ENCODE measurements at regions of chr22 and their contacts with region 1.

Region 1: GRCh38 chr22:36913427-36914389 is at the start of gene CSF2RB:
- DNase-seq: peak; percentile 78
- H3K4me3 ChIP-seq: peak within 1 kb of the TSS; percentile 45 to 76 (median 56)
- H3K27ac ChIP-seq: peak within 1 kb of the TSS; percentile 68
- H3K4me1 ChIP-seq: peaks cover 25% of the 10 kb centered on the region
- H3K27me3 ChIP-seq: no peaks in the 10 kb centered on the region
- CTCF ChIP-seq: no peak
- POLR2A ChIP-seq: peak; percentile 36
- total RNA-seq, gene CSF2RB: 20.6 and 24.9 TPM in 2 replicates

Region 2: DNA sequence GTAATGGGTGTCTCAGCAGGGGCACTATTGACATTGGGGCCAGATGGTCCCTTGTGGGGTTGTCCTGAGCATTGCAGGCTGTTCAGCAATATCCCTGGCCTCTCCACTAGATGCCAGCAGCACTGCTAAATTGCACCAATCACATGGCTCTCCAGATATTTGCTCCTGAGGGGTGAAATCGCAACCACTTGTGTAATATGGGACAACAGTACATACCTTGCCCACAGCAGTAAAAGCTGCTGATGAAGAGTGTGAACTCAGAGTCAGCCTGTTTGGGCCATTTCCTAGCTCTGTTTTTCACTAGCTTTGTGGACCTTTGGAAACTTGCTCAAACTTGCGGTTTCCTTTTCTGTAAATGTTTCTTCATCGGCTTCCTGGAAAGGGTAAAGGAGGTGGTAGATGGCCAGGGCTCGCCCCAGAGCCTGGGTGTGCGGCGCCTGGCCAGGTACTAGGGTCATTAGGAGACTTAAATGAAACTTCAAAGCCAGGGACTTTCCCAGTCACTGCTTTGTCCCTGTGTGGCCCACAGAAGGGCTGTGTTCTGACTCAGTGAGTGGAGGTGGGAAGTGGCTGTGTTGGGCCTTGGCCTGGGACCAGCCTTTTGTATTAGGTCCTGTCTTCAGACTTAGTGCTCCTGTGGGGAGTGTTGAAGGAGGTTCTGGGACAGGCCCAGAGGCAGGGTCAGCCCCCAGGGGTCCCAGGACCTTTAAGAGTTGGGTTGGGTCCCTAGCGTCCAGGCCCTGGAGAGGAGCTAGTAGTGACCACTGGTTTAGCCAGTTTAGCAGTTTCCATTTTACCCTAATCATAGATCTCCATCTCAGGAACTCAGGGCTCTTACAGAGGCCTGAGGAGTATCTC is 39.8 kb before region 1 on chr22:
- CTCF ChIA-PET with region 1: interaction called, 9 read pairs
- POLR2A ChIA-PET with region 1: no interaction called
- dilution Hi-C with region 1: no loop called
- intact Hi-C with region 1: loop called (anchors 1 kb)
- DNase-seq: peak; percentile 82
- H3K4me3 ChIP-seq: no peak overlapping the region
- H3K27ac ChIP-seq: peak overlapping the region; percentile 82
- H3K4me1 ChIP-seq: peaks cover 26% of the 10 kb centered on the region
- H3K27me3 ChIP-seq: peaks cover 0 to 2% of the 10 kb centered on the region in 2 experiments
- CTCF ChIP-seq: peak; percentile 71 to 74
- POLR2A ChIP-seq: no peak

Region 3: GRCh38 chr22:36879775-36880174 is 33.9 kb before region 1 on chr22:
- CTCF ChIA-PET with region 1: interaction called, 3 read pairs
- POLR2A ChIA-PET with region 1: no interaction called
- dilution Hi-C with region 1: no loop called
- intact Hi-C with region 1: loop called (anchors 1 kb)
- DNase-seq: peak; percentile 93
- H3K4me3 ChIP-seq: no peak overlapping the region
- H3K27ac ChIP-seq: peak overlapping the region; percentile 96
- H3K4me1 ChIP-seq: peaks cover 37% of the 10 kb centered on the region
- H3K27me3 ChIP-seq: no peaks in the 10 kb centered on the region
- CTCF ChIP-seq: no peak
- POLR2A ChIP-seq: peak; percentile 51

Region 4: DNA sequence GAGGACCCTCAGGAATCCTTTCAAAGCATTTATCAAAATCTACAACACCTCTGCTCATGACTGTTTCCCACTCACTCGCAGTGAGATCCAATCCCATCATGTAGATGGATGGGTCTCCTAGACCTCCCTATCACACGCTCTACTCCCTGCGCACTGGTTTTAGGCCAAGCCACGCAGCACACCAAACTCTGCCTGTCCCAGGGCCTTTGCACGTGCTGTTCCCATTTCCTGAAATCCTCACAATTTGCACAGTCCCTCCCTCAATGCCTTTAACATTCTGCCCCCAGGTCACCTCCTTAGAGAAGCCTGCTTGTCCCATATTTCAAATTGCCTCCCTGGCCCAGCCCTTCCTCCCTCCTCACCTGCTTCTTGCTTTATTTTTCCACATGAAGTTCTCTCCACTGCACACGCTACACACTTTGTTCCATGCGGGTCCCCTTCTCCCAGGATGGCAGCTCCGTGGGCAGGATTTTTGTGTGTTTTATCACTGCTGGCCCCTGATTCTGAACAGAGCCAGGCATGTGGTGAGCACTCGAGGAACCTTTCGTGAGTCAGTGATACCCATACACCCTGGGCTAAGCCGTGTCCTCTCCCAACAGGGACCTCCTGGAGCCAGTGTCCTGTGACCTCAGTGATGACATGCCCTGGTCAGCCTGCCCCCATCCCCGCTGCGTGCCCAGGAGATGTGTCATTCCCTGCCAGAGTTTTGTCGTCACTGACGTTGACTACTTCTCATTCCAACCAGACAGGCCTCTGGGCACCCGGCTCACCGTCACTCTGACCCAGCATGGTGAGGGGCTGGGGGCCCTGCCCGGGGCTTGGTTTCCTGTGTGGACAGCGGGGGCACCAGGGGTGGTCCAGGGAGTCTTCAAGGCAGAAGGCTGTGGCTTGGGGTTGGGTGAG is 11.9 kb after region 1 on chr22:
- CTCF ChIA-PET with region 1: no interaction called
- POLR2A ChIA-PET with region 1: no interaction called
- dilution Hi-C with region 1: no loop called
- intact Hi-C with region 1: no loop called
- DNase-seq: no peak
- H3K4me3 ChIP-seq: no peak overlapping the region
- H3K27ac ChIP-seq: no peak overlapping the region
- H3K4me1 ChIP-seq: no peaks in the 10 kb centered on the region
- H3K27me3 ChIP-seq: no peaks in the 10 kb centered on the region
- CTCF ChIP-seq: no peak
- POLR2A ChIP-seq: no peak